ENCODE measurements at regions of chr12 and their contacts with region 1.

Region 1: DNA sequence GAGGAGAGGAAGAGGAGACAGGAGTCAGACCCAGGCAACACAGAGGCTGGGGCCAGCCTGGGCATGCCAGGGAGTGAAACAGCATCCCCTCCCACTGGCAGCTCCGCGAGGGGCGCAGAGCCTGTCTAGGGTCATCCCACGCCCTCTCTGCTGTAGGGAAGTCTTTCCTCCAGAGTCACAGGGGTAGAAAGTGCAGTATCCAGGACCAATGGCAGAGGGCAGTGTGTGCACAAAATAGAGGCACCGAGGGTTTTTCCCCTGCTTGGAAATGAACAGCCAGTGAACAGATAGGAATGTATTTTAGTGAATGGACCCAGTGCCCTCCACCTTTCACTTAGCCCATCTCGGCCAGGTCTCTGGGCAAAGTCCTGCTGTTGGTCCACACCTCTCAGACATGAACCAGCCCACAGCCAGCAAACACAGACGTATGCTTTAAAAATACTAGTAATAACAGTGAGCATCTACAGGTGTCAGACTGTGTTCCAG is 9.4 kb upstream of the KRT74 start:
- DNase-seq: peak; percentile 64 to 84
- ATAC-seq: peak; percentile 60 to 67 (median 66)
- H3K4me3 ChIP-seq: no peak overlapping the region
- H3K4me3 Mint-ChIP-seq: no peak overlapping the region
- H3K27ac ChIP-seq: no peak overlapping the region
- H3K27ac Mint-ChIP-seq: peak overlapping the region; percentile 5 to 63
- H3K4me1 ChIP-seq: peaks cover 31% of the 10 kb centered on the region
- H3K4me1 Mint-ChIP-seq: peaks cover 38 to 40% of the 10 kb centered on the region in 2 donors
- H3K27me3 ChIP-seq: no peaks in the 10 kb centered on the region
- H3K27me3 Mint-ChIP-seq: peaks cover 17 to 18% of the 10 kb centered on the region in 2 donors
- CTCF ChIP-seq: peak; percentile 79

Region 2: GRCh38 chr12:52372216-52373154 is 210.5 kb before region 1 on chr12:
- intact Hi-C with region 1: loop called (anchors 5 kb)
- DNase-seq: peak; percentile 63 to 77
- ATAC-seq: peak; percentile 55 to 86 (median 83)
- H3K4me3 ChIP-seq: no peak overlapping the region
- H3K4me3 Mint-ChIP-seq: no peak overlapping the region
- H3K27ac ChIP-seq: no peak overlapping the region
- H3K27ac Mint-ChIP-seq: no peak overlapping the region
- H3K4me1 ChIP-seq: no peaks in the 10 kb centered on the region
- H3K4me1 Mint-ChIP-seq: peaks cover 0 to 11% of the 10 kb centered on the region in 2 donors
- H3K27me3 ChIP-seq: peaks cover 10% of the 10 kb centered on the region
- H3K27me3 Mint-ChIP-seq: peaks cover 51 to 52% of the 10 kb centered on the region in 2 donors
- CTCF ChIP-seq: peak; percentile 68

Region 3: GRCh38 chr12:52634266-52635056 is 51.4 kb after region 1 on chr12:
- intact Hi-C with region 1: loop called (anchors 5 kb)
- DNase-seq: no peak
- ATAC-seq: no peak
- H3K4me3 ChIP-seq: no peak overlapping the region
- H3K4me3 Mint-ChIP-seq: no peak overlapping the region
- H3K27ac ChIP-seq: no peak overlapping the region
- H3K27ac Mint-ChIP-seq: peak overlapping the region; percentile 18 to 67
- H3K4me1 ChIP-seq: peaks cover 45% of the 10 kb centered on the region
- H3K4me1 Mint-ChIP-seq: peaks cover 74% of the 10 kb centered on the region in 2 donors
- H3K27me3 ChIP-seq: no peaks in the 10 kb centered on the region
- H3K27me3 Mint-ChIP-seq: no peaks in the 10 kb centered on the region
- CTCF ChIP-seq: no peak

Region 4: GRCh38 chr12:52645120-52645761 is 62.2 kb after region 1 on chr12:
- intact Hi-C with region 1: loop called (anchors 2 kb)
- DNase-seq: peak; percentile 51 to 88
- ATAC-seq: peak; percentile 85 to 91 (median 90)
- H3K4me3 ChIP-seq: no peak overlapping the region
- H3K4me3 Mint-ChIP-seq: peak overlapping the region; percentile 84
- H3K27ac ChIP-seq: peak overlapping the region; percentile 89
- H3K27ac Mint-ChIP-seq: peak overlapping the region; percentile 97 to 98
- H3K4me1 ChIP-seq: peaks cover 42% of the 10 kb centered on the region
- H3K4me1 Mint-ChIP-seq: peaks cover 75 to 86% of the 10 kb centered on the region in 2 donors
- H3K27me3 ChIP-seq: no peaks in the 10 kb centered on the region
- H3K27me3 Mint-ChIP-seq: no peaks in the 10 kb centered on the region
- CTCF ChIP-seq: no peak

Region 5: GRCh38 chr12:52655720-52656124 is 72.7 kb after region 1 on chr12:
- intact Hi-C with region 1: no loop called
- DNase-seq: no peak
- ATAC-seq: no peak
- H3K4me3 ChIP-seq: no peak overlapping the region
- H3K4me3 Mint-ChIP-seq: no peak overlapping the region
- H3K27ac ChIP-seq: no peak overlapping the region
- H3K27ac Mint-ChIP-seq: no peak overlapping the region
- H3K4me1 ChIP-seq: no peaks in the 10 kb centered on the region
- H3K4me1 Mint-ChIP-seq: peaks cover 14 to 30% of the 10 kb centered on the region in 2 donors
- H3K27me3 ChIP-seq: no peaks in the 10 kb centered on the region
- H3K27me3 Mint-ChIP-seq: no peaks in the 10 kb centered on the region
- CTCF ChIP-seq: no peak

Region 6: DNA sequence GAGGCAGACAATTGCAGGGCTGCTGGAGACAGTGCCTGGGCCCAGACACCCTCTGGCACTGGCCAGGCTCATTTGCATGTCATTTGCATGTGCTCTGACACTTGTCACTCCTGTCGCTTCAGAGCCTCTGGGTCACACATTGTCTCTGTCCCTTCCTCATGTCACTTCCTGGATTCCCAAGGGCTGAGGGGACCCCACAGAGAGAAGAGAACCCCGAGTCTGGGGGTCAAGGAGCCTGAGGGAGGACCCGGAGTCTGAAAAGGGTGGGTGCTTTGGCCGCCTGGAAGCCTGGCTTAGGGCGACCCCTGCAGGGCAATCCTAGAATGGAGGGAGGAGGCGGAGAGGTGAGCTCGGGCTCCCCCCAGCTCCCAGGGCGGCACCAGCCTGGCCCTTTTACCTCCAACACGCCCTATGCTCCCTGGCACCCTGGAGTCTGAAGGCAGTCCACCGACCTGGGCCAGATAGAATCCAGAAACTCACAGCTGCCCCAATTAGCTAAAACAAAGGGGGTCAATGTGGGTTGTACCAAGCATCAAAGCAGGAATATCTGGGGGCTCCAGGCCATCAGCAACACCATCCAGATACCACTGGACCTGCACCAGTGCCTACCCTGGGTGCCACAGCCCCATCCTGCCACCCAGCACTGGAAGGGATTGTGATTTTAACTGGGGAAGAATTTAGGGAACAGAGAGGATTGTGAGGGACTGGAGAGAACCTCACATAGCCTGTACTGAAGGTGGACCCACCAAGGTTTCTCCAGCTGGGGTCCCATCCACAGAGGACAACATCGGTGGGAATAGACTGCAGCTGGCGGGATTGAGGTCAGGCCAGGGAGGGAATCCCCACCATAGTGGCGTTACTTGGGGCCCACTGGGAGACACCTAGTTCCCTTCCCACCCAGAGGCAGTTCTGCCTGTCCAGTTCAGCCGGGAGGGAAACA is 287.6 kb after region 1 on chr12:
- intact Hi-C with region 1: loop called (anchors 1 kb)
- DNase-seq: peak; percentile 81 to 88
- ATAC-seq: peak; percentile 53 to 77 (median 67)
- H3K4me3 ChIP-seq: no peak overlapping the region
- H3K4me3 Mint-ChIP-seq: no peak overlapping the region
- H3K27ac ChIP-seq: peak overlapping the region; percentile 53
- H3K27ac Mint-ChIP-seq: peak overlapping the region in 1 of 2 donors; percentile 92
- H3K4me1 ChIP-seq: peaks cover 44% of the 10 kb centered on the region
- H3K4me1 Mint-ChIP-seq: peaks cover 27 to 76% of the 10 kb centered on the region in 2 donors
- H3K27me3 ChIP-seq: peaks cover 5% of the 10 kb centered on the region
- H3K27me3 Mint-ChIP-seq: peaks cover 0 to 17% of the 10 kb centered on the region in 2 donors
- CTCF ChIP-seq: peak; percentile 88

Region 7: GRCh38 chr12:52879394-52880351 is 296.7 kb after region 1 on chr12:
- intact Hi-C with region 1: loop called (anchors 1 kb)
- DNase-seq: peak; percentile 77 to 85
- ATAC-seq: peak; percentile 95 to 98 (median 98)
- H3K4me3 ChIP-seq: no peak overlapping the region
- H3K4me3 Mint-ChIP-seq: peak overlapping the region; percentile 68
- H3K27ac ChIP-seq: no peak overlapping the region
- H3K27ac Mint-ChIP-seq: peak overlapping the region in 1 of 2 donors; percentile 37
- H3K4me1 ChIP-seq: peaks cover 22% of the 10 kb centered on the region
- H3K4me1 Mint-ChIP-seq: peaks cover 2 to 33% of the 10 kb centered on the region in 2 donors
- H3K27me3 ChIP-seq: peaks cover 3% of the 10 kb centered on the region
- H3K27me3 Mint-ChIP-seq: peaks cover 0 to 27% of the 10 kb centered on the region in 2 donors
- CTCF ChIP-seq: peak; percentile 99

Region 8: GRCh38 chr12:52980693-52981423 is 397.8 kb after region 1 on chr12:
- intact Hi-C with region 1: loop called (anchors 2 kb)
- DNase-seq: peak; percentile 65 to 92
- ATAC-seq: peak; percentile 94 to 99 (median 98)
- H3K4me3 ChIP-seq: no peak overlapping the region
- H3K4me3 Mint-ChIP-seq: no peak overlapping the region
- H3K27ac ChIP-seq: no peak overlapping the region
- H3K27ac Mint-ChIP-seq: no peak overlapping the region
- H3K4me1 ChIP-seq: peaks cover 4% of the 10 kb centered on the region
- H3K4me1 Mint-ChIP-seq: peaks cover 0 to 7% of the 10 kb centered on the region in 2 donors
- H3K27me3 ChIP-seq: peaks cover 5% of the 10 kb centered on the region
- H3K27me3 Mint-ChIP-seq: peaks cover 28 to 33% of the 10 kb centered on the region in 2 donors
- CTCF ChIP-seq: peak; percentile 98